ENCODE measurements at regions of chr11 and their contacts with region 1.

Region 1: GRCh38 chr11:69101115-69101791 is 52.5 kb downstream of the TPCN2 start:
- DNase-seq: peak; percentile 96
- H3K4me3 ChIP-seq: peak overlapping the region in 1 of 2 experiments; percentile 16; a peak in 1 of 4 replicates
- H3K27ac ChIP-seq: no peak overlapping the region; a peak in 1 of 4 replicates
- H3K4me1 ChIP-seq: peaks cover 10 to 27% of the 10 kb centered on the region in 2 experiments; a peak in 2 of 4 replicates
- H3K27me3 ChIP-seq: no peaks in the 10 kb centered on the region
- CTCF ChIP-seq: peak; percentile 98
- EP300 ChIP-seq: no peak
- RAD21 ChIP-seq: peak; percentile 99

Region 2: DNA sequence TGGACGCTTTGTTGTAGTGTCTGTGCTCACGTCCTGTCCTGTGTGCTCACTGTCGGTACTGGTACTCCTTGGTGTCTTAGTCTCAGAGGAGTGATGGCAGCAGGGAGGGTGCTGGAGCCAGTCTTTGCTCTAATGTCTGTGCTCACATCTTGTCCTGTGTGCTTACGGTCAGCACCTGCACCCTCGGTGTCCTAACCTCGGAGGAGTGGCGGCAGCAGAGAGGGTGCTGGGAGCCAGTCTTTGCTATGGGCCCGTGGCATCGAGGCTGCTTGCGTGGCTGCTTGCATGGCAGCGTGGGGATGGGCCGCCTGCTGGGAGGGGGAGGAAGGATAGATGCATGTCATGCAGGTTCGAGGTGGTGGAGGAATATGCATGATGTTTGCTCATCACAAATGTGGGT is 184.8 kb before region 1 on chr11:
- CTCF ChIA-PET with region 1: no interaction called
- POLR2A ChIA-PET with region 1: no interaction called
- DNase-seq: no peak
- H3K4me3 ChIP-seq: no peak overlapping the region
- H3K27ac ChIP-seq: no peak overlapping the region
- H3K4me1 ChIP-seq: no peaks in the 10 kb centered on the region
- H3K27me3 ChIP-seq: no peaks in the 10 kb centered on the region
- CTCF ChIP-seq: no peak
- EP300 ChIP-seq: no peak
- RAD21 ChIP-seq: no peak

Region 3: GRCh38 chr11:69131644-69132300 is 30.5 kb after region 1 on chr11:
- CTCF ChIA-PET with region 1: interaction called, 17 read pairs
- POLR2A ChIA-PET with region 1: no interaction called
- DNase-seq: peak; percentile 70
- H3K4me3 ChIP-seq: no peak overlapping the region
- H3K27ac ChIP-seq: 0 out of 4 replicates have a peak overlapping the region, but pooled peaks of 1 of the 2 experiments have one; percentile 8
- H3K4me1 ChIP-seq: peaks cover 0 to 15% of the 10 kb centered on the region in 2 experiments; a peak in 1 of 4 replicates
- H3K27me3 ChIP-seq: no peaks in the 10 kb centered on the region
- CTCF ChIP-seq: peak; percentile 75
- EP300 ChIP-seq: no peak
- RAD21 ChIP-seq: peak; percentile 78

Region 4: GRCh38 chr11:69211920-69212571 is 110.8 kb after region 1 on chr11:
- CTCF ChIA-PET with region 1: interaction called, 11 read pairs
- POLR2A ChIA-PET with region 1: no interaction called
- DNase-seq: peak; percentile 66
- H3K4me3 ChIP-seq: no peak overlapping the region
- H3K27ac ChIP-seq: peak overlapping the region in 1 of 2 experiments; percentile 9; a peak in 2 of 4 replicates
- H3K4me1 ChIP-seq: peaks cover 0 to 8% of the 10 kb centered on the region in 2 experiments; a peak in 1 of 4 replicates
- H3K27me3 ChIP-seq: no peaks in the 10 kb centered on the region
- CTCF ChIP-seq: peak; percentile 30
- EP300 ChIP-seq: no peak
- RAD21 ChIP-seq: peak; percentile 45

Region 5: GRCh38 chr11:69642913-69643632 is 541.8 kb after region 1 on chr11:
- CTCF ChIA-PET with region 1: interaction called, 403 read pairs
- POLR2A ChIA-PET with region 1: interaction called, 27 read pairs
- DNase-seq: peak; percentile 84
- H3K4me3 ChIP-seq: peak overlapping the region; percentile 95 to 96
- H3K27ac ChIP-seq: peak overlapping the region; percentile 94
- H3K4me1 ChIP-seq: peaks cover 29 to 37% of the 10 kb centered on the region in 2 experiments; a peak in 3 of 4 replicates
- H3K27me3 ChIP-seq: no peaks in the 10 kb centered on the region
- CTCF ChIP-seq: peak; percentile 83
- EP300 ChIP-seq: no peak
- RAD21 ChIP-seq: peak; percentile 86

Region 6: GRCh38 chr11:69670158-69670845 is 569.0 kb after region 1 on chr11:
- CTCF ChIA-PET with region 1: interaction called, 254 read pairs
- POLR2A ChIA-PET with region 1: interaction called, 4 read pairs
- DNase-seq: peak; percentile 93
- H3K4me3 ChIP-seq: no peak overlapping the region; a peak in 1 of 4 replicates
- H3K27ac ChIP-seq: peak overlapping the region; percentile 20 to 39; a peak in 2 of 4 replicates
- H3K4me1 ChIP-seq: peaks cover 8 to 20% of the 10 kb centered on the region in 2 experiments; a peak in 3 of 4 replicates
- H3K27me3 ChIP-seq: no peaks in the 10 kb centered on the region
- CTCF ChIP-seq: peak; percentile 94
- EP300 ChIP-seq: no peak
- RAD21 ChIP-seq: peak; percentile 91